ENCODE measurements at regions of chr12 and their contacts with region 1.

Region 1: DNA sequence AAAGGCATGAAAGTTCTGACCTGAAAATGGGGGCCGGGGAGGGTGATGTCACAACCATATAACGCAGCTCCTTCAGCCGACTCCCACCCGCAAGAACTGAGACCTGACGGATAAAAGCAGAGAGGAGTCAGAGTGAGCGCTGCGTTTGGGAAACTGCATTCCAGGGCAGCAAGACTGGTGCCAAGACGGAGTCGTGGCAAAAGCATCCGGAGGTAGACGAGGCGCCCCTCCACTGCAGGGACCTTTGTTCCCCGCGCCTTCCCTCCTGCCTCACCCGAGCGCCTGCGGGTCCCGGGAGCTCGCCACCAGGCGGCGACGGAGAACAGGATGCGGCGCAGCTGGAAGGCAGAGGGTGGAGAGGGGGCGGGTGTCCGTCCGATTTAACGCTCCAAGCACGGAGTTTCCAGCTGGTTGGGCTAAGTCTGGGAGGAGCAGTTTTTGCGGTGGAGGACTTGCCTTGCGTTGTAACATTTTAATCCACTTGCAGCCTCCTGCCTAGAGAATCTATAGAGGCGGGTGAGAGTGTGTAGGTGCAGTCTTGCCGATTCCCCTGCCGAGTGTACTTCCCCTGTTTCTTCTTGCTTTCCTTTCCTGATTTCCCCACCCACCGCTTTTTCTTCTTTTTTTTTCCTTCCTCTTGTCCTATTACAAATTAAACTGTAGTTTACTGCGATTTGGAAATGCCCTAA is 1.2 kb upstream of the CPNE8 start:
- DNase-seq: peak; percentile 84
- H3K4me3 ChIP-seq: peak overlapping the region; percentile 64 to 76 (median 70)
- H3K27ac ChIP-seq: peak overlapping the region; percentile 11
- H3K4me1 ChIP-seq: peaks cover 19% of the 10 kb centered on the region
- H3K27me3 ChIP-seq: no peaks in the 10 kb centered on the region
- CTCF ChIP-seq: peak; percentile 95 to 98
- POLR2A ChIP-seq: no peak

Region 2: DNA sequence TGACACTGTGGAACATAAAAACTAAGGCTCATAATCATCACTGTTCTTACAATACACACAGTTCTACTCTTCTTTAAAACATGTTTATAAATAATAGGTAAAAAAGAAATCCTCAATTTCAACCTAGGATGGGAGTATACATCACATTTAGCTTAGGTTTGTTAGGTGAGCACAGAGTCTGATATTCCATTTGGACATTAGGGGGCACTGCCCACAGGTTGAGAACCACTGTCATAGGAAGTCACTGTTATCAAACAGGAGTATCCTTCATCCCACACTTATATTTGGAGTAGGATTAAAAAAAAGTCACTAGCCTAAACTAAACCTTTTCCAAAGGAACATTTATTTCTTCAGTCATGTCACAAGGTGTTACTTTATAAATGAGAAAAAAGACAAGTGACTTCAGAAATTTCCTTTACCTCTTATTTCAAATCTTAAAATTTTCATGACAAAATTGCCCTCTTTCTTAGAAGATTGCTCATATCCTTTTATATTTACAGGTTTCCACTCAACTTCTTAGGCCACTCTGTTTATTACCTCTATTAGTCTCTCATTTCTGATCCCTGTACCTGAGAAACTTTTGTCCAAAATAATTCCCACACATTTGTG is 241.9 kb before region 1 on chr12:
- CTCF ChIA-PET with region 1: interaction called, 60 read pairs
- POLR2A ChIA-PET with region 1: no interaction called
- dilution Hi-C with region 1: no loop called
- intact Hi-C with region 1: loop called (anchors 1 kb)
- DNase-seq: peak; percentile 59
- H3K4me3 ChIP-seq: no peak overlapping the region
- H3K27ac ChIP-seq: no peak overlapping the region
- H3K4me1 ChIP-seq: no peaks in the 10 kb centered on the region
- H3K27me3 ChIP-seq: no peaks in the 10 kb centered on the region
- CTCF ChIP-seq: peak; percentile 35 to 61
- POLR2A ChIP-seq: no peak

Region 3: DNA sequence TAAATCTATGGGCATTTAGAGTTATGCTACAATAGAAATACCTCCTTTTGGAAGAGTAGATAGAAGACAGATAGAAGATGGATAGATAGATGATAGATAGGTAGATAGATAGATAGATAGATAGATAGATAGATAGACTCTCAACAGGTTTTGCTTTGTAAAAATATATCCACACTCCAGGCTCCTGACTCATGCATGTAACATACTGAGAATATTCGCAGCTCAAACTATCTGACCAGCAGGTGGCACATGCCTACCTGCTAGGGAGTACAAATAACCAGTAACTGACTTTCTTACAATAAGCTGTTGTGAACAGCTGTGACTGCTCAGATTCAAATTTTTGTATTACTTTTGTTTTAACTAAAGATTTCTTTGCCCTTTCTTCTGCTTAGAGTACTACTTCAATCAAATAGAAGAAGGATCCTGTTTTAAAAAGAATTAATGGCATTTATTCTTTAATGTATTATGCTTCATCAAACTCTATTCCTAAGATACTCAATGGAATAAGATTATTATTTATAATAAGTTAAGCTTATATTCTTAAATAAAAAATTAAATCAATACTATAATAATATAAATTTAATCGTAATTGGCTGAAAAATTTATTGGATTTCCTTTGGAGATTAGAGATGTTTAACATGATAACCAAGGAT is 14.5 kb after region 1 on chr12:
- CTCF ChIA-PET with region 1: interaction called, 63 read pairs
- POLR2A ChIA-PET with region 1: no interaction called
- dilution Hi-C with region 1: no loop called
- intact Hi-C with region 1: no loop called
- DNase-seq: peak; percentile 68
- H3K4me3 ChIP-seq: no peak overlapping the region
- H3K27ac ChIP-seq: no peak overlapping the region
- H3K4me1 ChIP-seq: no peaks in the 10 kb centered on the region
- H3K27me3 ChIP-seq: no peaks in the 10 kb centered on the region
- CTCF ChIP-seq: peak; percentile 48 to 58
- POLR2A ChIP-seq: no peak

Region 4: DNA sequence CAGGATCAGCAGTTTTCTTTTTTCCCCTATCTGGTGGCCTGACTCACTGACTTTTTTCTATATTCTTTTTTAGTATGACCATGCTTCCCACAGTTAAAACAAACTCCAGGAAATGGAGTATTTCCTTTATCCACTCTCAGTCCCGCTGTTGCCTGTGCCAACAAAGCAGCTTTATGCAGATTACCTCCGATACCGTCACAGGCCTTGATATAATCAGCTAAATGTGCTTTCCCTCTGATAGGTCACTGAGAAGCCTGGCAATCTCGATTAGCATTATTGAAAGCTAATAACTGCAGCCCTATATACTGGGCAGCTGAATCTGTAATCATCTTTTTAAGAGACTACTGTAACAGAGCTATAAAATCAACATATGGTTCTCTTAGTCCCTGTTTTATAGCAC is 292.7 kb after region 1 on chr12:
- CTCF ChIA-PET with region 1: no interaction called
- POLR2A ChIA-PET with region 1: no interaction called
- dilution Hi-C with region 1: no loop called
- intact Hi-C with region 1: loop called (anchors 1 kb)
- DNase-seq: peak; percentile 88
- H3K4me3 ChIP-seq: no peak overlapping the region
- H3K27ac ChIP-seq: no peak overlapping the region
- H3K4me1 ChIP-seq: peaks cover 8% of the 10 kb centered on the region
- H3K27me3 ChIP-seq: peaks cover 3 to 5% of the 10 kb centered on the region in 2 experiments
- CTCF ChIP-seq: no peak
- POLR2A ChIP-seq: no peak

Measured in endothelial cell of umbilical vein (primary cell).